Psoas muscle (tissue), 8 donors: ENCODE measurements at regions of chr6 and their contacts with region 1.

Region 1: DNA sequence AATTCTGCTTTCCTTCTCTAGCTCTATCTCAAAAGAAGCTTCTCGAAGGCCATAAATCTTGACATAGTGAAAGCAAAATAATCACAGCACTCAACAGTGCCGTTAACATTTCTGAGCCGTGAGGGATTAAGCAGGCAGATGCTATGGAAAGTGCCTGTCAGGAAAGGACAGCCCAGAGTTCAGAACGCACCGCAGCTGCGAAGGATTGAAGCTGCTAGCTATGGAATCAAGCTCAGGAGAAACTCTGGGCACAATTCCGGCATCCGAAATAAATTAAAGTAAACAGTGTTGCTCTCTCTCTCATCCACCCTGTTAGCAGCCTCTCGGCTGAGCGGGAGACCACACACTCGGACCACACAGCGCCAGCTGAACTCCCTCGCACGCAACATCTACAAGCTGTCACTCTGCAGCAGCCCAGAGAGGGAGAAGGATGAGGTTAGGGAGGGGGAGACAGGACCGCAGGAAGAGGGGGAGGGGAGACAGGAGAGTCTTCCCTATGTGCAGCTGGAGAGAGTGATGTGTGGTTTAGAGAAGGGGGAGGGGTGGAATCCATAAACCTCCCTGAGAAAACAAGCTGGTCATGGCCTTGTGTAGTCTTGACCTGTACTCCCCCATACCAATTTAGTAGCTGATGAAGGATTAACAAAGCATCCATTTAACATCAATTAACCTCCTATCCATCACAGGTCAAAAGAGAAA is 9.0 kb downstream of the EXOC2 start:
- DNase-seq: no peak
- ATAC-seq: peak; percentile 41 to 55 (median 48)
- H3K4me3 ChIP-seq: peak overlapping the region; percentile 55
- H3K27ac ChIP-seq: peak overlapping the region; percentile 67
- H3K4me1 ChIP-seq: peaks cover 31% of the 10 kb centered on the region
- H3K27me3 ChIP-seq: no peaks in the 10 kb centered on the region
- CTCF ChIP-seq: no peak

Region 2: DNA sequence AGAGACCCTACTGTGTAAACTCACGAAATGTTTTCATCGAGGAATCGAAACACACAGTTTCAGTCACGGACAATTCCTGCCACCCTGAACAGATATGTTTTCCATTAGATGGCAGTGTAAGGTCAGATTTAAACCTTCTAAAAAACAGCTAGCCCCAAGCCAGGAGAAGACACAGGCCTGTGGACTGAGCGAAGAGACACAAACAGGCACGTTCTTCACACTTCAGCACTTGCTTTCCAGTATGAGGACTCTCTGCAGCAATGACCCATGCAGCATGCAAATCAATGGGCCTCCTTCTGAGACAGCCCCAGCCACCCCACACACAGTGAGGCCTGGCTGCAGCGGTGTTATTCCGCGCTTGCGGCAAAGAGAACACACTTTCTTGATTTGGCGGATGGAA is 58.9 kb before region 1 on chr6:
- intact Hi-C with region 1: loop called (anchors 5 to 10 kb)
- DNase-seq: no peak
- ATAC-seq: peak in 2 of 4 donors; percentile 9 to 38
- H3K4me3 ChIP-seq: no peak overlapping the region
- H3K27ac ChIP-seq: no peak overlapping the region
- H3K4me1 ChIP-seq: peaks cover 6% of the 10 kb centered on the region
- H3K27me3 ChIP-seq: no peaks in the 10 kb centered on the region
- CTCF ChIP-seq: no peak